ENCODE measurements at regions of chrX and their contacts with region 1.

Region 1: GRCh38 chrX:71283403-71284143 is at the start of gene NONO:
- DNase-seq: peak; percentile 56 to 98 (median 80)
- ATAC-seq: peak; percentile 85
- H3K4me3 ChIP-seq: peak within 1 kb of the TSS; percentile 65 to 86
- H3K4me3 Mint-ChIP-seq: peak within 1 kb of the TSS; percentile 99
- H3K27ac ChIP-seq: peak within 1 kb of the TSS; percentile 90 to 98
- H3K27ac Mint-ChIP-seq: peak within 1 kb of the TSS; percentile 100
- H3K4me1 ChIP-seq: peaks cover 26% of the 10 kb centered on the region
- H3K4me1 Mint-ChIP-seq: peaks cover 24% of the 10 kb centered on the region
- H3K27me3 ChIP-seq: no peaks in the 10 kb centered on the region
- H3K27me3 Mint-ChIP-seq: no peaks in the 10 kb centered on the region
- CTCF ChIP-seq: no peak
- total RNA-seq, gene NONO: 488 to 500 TPM

Region 2: GRCh38 chrX:71068049-71068763 is 215.4 kb before region 1 on chrX and contains the start of gene SNX12:
- CTCF ChIA-PET with region 1: no interaction called
- POLR2A ChIA-PET with region 1: no interaction called
- intact Hi-C with region 1: loop called (anchors 1 to 10 kb)
- DNase-seq: peak; percentile 70 to 95 (median 84)
- ATAC-seq: peak; percentile 92
- H3K4me3 ChIP-seq: peak within 1 kb of the TSS; percentile 76 to 88
- H3K4me3 Mint-ChIP-seq: peak within 1 kb of the TSS; percentile 94
- H3K27ac ChIP-seq: peak within 1 kb of the TSS; percentile 86 to 91
- H3K27ac Mint-ChIP-seq: peak within 1 kb of the TSS; percentile 99
- H3K4me1 ChIP-seq: peaks cover 13% of the 10 kb centered on the region
- H3K4me1 Mint-ChIP-seq: peaks cover 27% of the 10 kb centered on the region
- H3K27me3 ChIP-seq: no peaks in the 10 kb centered on the region
- H3K27me3 Mint-ChIP-seq: no peaks in the 10 kb centered on the region
- CTCF ChIP-seq: no peak
- total RNA-seq, gene SNX12: 23.9 to 27.1 TPM

Region 3: DNA sequence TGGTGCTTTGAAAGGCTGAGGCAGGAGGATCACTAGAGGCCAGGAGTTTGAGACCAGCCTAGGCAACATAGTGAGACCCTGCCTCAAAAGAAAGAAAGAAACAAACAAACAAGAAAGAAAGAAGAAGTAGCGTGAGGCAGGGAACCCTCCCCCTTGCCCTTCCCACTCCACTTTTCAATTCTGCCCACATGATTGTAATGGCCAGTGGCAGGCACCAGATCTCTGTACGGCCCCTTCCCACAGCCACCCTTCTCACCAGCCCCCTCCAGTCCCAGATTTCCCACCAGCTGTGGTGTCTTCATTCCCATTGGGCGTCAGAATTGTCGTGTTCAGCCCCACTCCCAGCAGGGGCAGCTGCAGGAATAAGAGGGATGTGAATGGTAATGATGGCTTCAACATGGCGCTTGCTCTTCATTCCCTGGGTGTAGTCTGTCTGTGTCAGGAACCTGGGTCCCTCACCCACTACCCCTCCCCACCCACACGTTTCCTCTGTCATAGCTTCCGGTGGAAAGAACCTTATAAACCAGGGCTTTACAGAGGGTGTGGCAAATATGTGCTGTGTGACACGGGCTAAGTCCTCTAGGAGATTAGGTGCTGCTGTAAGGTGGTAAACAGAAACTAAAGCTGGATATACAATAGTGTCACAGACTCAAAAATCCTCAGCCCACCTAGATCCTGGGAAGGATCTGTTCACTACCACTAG is 172.3 kb before region 1 on chrX and contains the start of gene IL2RG:
- CTCF ChIA-PET with region 1: no interaction called
- POLR2A ChIA-PET with region 1: no interaction called
- intact Hi-C with region 1: loop called in 1 of 2 experiments (anchors 5 kb)
- DNase-seq: peak; percentile 53 to 94 (median 76)
- ATAC-seq: peak; percentile 85
- H3K4me3 ChIP-seq: peak within 1 kb of the TSS; percentile 74 to 84
- H3K4me3 Mint-ChIP-seq: peak within 1 kb of the TSS; percentile 98
- H3K27ac ChIP-seq: peak within 1 kb of the TSS; percentile 96 to 100
- H3K27ac Mint-ChIP-seq: peak within 1 kb of the TSS; percentile 99
- H3K4me1 ChIP-seq: peaks cover 41% of the 10 kb centered on the region
- H3K4me1 Mint-ChIP-seq: peaks cover 42% of the 10 kb centered on the region
- H3K27me3 ChIP-seq: no peaks in the 10 kb centered on the region
- H3K27me3 Mint-ChIP-seq: no peaks in the 10 kb centered on the region
- CTCF ChIP-seq: no peak
- total RNA-seq, gene IL2RG: 166 to 197 TPM

Region 4: GRCh38 chrX:71198066-71198465 is 85.5 kb before region 1 on chrX:
- CTCF ChIA-PET with region 1: no interaction called
- POLR2A ChIA-PET with region 1: interaction called, 4 read pairs
- intact Hi-C with region 1: loop called in 1 of 2 experiments (anchors 5 kb)
- DNase-seq: peak in 2 of 9 experiments; percentile 23 to 54
- ATAC-seq: peak; percentile 43
- H3K4me3 ChIP-seq: peak overlapping the region; percentile 52 to 53
- H3K4me3 Mint-ChIP-seq: peak overlapping the region; percentile 92
- H3K27ac ChIP-seq: peak overlapping the region; percentile 48 to 79
- H3K27ac Mint-ChIP-seq: peak overlapping the region; percentile 97
- H3K4me1 ChIP-seq: peaks cover 4% of the 10 kb centered on the region
- H3K4me1 Mint-ChIP-seq: peaks cover 33% of the 10 kb centered on the region
- H3K27me3 ChIP-seq: no peaks in the 10 kb centered on the region
- H3K27me3 Mint-ChIP-seq: no peaks in the 10 kb centered on the region
- CTCF ChIP-seq: no peak

Region 5: GRCh38 chrX:71378732-71379131 is 95.2 kb after region 1 on chrX:
- CTCF ChIA-PET with region 1: no interaction called
- POLR2A ChIA-PET with region 1: no interaction called
- intact Hi-C with region 1: no loop called
- DNase-seq: no peak
- ATAC-seq: no peak
- H3K4me3 ChIP-seq: no peak overlapping the region
- H3K4me3 Mint-ChIP-seq: no peak overlapping the region
- H3K27ac ChIP-seq: no peak overlapping the region
- H3K27ac Mint-ChIP-seq: no peak overlapping the region
- H3K4me1 ChIP-seq: no peaks in the 10 kb centered on the region
- H3K4me1 Mint-ChIP-seq: peaks cover 4% of the 10 kb centered on the region
- H3K27me3 ChIP-seq: no peaks in the 10 kb centered on the region
- H3K27me3 Mint-ChIP-seq: no peaks in the 10 kb centered on the region
- CTCF ChIP-seq: no peak